PC-3 (cell line): ENCODE measurements at regions of chr17 and their contacts with region 1.

Region 1: GRCh38 chr17:979538-980405 is at the start of gene NXN:
- DNase-seq: peak; percentile 51
- ATAC-seq: peak; percentile 78
- H3K4me3 ChIP-seq: peak within 1 kb of the TSS; percentile 79
- H3K27ac ChIP-seq: peak within 1 kb of the TSS; percentile 22; the same call in 1 of the 2 replicates
- H3K4me1 ChIP-seq: peaks cover 11% of the 10 kb centered on the region; the same call in 1 of the 2 replicates
- H3K27me3 ChIP-seq: no peaks in the 10 kb centered on the region
- CTCF ChIP-seq: no peak
- total RNA-seq, gene NXN: 20.8 and 25.6 TPM in 2 replicates

Region 2: DNA sequence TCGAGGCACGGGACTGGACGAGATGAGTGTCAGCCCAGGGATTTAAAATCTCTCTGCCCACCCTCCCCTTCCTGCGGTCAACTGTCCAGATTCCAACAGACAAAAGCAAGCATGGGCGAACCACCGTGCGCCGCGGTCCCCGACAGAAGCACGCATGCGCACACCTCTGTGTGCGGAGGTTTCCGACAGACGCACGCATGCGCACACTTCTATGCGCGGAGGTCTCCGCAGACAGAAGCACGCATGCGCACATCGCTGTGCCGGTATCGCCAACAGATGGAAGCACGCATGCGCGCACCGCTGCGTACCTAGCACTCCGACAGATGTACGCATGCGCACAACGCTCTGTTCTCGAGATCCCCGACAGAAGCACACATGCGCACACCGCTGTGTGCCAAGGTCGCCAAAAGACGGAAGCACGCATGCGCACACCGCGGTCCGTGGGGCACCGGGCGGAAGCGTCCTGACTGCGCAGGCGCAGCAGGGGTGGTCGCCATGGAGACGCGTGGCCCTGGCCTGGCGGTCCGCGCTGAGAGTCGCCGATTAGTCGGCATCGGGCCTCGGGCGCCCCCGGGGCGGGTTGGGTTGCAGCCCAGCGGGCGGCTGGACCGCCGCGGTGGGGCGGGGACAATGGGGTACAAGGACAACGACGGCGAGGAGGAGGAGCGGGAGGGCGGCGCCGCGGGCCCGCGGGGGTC is 569.8 kb before region 1 on chr17:
- CTCF ChIA-PET with region 1: interaction called, 13 read pairs
- POLR2A ChIA-PET with region 1: no interaction called
- intact Hi-C with region 1: no loop called
- DNase-seq: peak; percentile 99
- ATAC-seq: peak; percentile 86
- H3K4me3 ChIP-seq: peak overlapping the region; percentile 88
- H3K27ac ChIP-seq: peak overlapping the region; percentile 25; the same call in 1 of the 2 replicates
- H3K4me1 ChIP-seq: peaks cover 4% of the 10 kb centered on the region; the same call in 1 of the 2 replicates
- H3K27me3 ChIP-seq: no peaks in the 10 kb centered on the region
- CTCF ChIP-seq: no peak

Region 3: GRCh38 chr17:794876-795275 is 184.9 kb before region 1 on chr17:
- CTCF ChIA-PET with region 1: interaction called, 12 read pairs
- POLR2A ChIA-PET with region 1: no interaction called
- intact Hi-C with region 1: loop called (anchors 1 kb)
- DNase-seq: peak; percentile 80
- ATAC-seq: peak; percentile 76
- H3K4me3 ChIP-seq: peak overlapping the region; percentile 51; the same call in 1 of the 2 replicates
- H3K27ac ChIP-seq: no peak overlapping the region
- H3K4me1 ChIP-seq: peaks cover 9% of the 10 kb centered on the region
- H3K27me3 ChIP-seq: no peaks in the 10 kb centered on the region
- CTCF ChIP-seq: peak; percentile 86

Region 4: GRCh38 chr17:835263-835662 is 144.5 kb before region 1 on chr17:
- CTCF ChIA-PET with region 1: no interaction called
- POLR2A ChIA-PET with region 1: no interaction called
- intact Hi-C with region 1: no loop called
- DNase-seq: peak; percentile 2
- ATAC-seq: no peak
- H3K4me3 ChIP-seq: no peak overlapping the region
- H3K27ac ChIP-seq: no peak overlapping the region
- H3K4me1 ChIP-seq: no peaks in the 10 kb centered on the region
- H3K27me3 ChIP-seq: no peaks in the 10 kb centered on the region
- CTCF ChIP-seq: no peak

Region 5: DNA sequence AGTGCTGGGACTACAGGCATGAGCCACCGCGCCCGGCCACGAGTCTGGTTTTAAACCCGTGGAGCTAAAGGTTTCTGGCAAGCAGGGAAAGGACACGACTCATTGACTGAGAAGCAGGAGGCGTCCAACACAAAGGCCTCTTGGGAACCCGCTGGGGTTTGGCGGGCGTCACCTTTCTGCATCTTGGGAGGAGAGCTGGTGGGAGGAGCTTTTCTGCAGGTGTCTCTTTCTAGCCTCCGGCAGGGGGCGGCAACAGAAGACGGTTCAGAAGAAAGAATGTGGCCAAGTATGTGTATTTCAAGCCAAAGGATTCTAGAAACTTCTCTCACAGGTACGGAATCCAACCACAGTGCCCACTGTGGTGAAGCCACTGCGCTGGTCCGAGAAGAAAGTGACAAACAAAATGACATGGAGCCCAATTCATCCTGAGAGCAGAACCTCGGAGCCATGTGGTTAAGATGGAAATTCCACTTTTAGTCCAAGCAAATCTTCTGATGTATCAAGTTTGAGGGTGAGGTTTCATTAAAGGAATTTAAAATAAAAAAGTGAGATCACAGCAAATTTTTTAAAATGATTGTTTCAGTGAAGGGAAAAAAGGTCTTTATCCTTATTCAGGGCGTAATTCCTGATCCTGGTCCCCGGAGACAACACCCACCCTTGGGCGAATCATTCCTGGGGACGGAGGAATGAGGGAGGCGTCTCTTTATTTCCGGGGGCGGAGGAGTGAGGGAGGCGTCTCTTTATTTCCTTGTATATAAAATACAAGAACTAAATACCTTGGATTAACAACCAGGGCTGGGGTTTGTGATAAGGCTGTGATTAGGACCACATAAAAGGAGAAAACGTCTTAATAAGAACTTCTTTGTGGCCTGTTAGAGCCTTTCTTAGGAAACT is 100.0 kb before region 1 on chr17:
- CTCF ChIA-PET with region 1: interaction called, 20 read pairs
- POLR2A ChIA-PET with region 1: no interaction called
- intact Hi-C with region 1: loop called (anchors 1 kb)
- DNase-seq: peak; percentile 84
- ATAC-seq: peak; percentile 90
- H3K4me3 ChIP-seq: no peak overlapping the region
- H3K27ac ChIP-seq: no peak overlapping the region
- H3K4me1 ChIP-seq: no peaks in the 10 kb centered on the region; the same call in 1 of the 2 replicates
- H3K27me3 ChIP-seq: no peaks in the 10 kb centered on the region
- CTCF ChIP-seq: peak; percentile 62

Region 6: GRCh38 chr17:927611-928461 is 51.9 kb before region 1 on chr17:
- CTCF ChIA-PET with region 1: interaction called, 3 read pairs
- POLR2A ChIA-PET with region 1: interaction called, 11 read pairs
- intact Hi-C with region 1: loop called (anchors 10 kb)
- DNase-seq: peak; percentile 88
- ATAC-seq: peak; percentile 76
- H3K4me3 ChIP-seq: peak overlapping the region; percentile 58; the same call in 1 of the 2 replicates
- H3K27ac ChIP-seq: peak overlapping the region; percentile 64
- H3K4me1 ChIP-seq: peaks cover 45% of the 10 kb centered on the region
- H3K27me3 ChIP-seq: no peaks in the 10 kb centered on the region
- CTCF ChIP-seq: no peak

Region 7: DNA sequence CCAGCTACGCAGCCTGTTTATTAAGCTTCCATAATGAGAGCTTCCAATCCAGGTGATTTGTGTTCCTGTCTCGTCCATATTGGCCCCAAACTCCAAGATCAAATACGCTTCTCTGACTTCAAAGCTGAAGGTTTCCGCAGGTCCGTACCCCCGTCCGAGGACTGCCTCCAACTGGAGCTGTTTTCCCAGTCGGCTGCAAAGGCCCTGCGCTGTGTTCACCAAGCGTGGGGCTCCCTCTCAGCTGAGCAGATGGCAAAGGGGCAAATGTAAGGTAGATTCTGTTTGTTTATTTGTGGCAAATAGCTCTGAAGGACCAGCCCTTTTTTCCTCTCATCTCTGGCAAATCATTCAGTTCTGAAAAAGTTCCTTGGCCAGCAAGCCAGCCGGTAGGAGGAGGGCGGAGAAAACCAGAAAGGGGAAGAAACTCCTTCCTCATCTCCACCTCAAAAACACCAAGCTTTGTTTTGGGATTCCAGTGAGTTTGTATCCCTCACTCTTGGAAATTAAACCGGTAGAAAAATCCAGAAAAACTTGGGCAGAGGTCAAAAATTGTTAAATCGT is 35.4 kb before region 1 on chr17:
- CTCF ChIA-PET with region 1: no interaction called
- POLR2A ChIA-PET with region 1: no interaction called
- intact Hi-C with region 1: no loop called
- DNase-seq: no peak
- ATAC-seq: no peak
- H3K4me3 ChIP-seq: no peak overlapping the region
- H3K27ac ChIP-seq: no peak overlapping the region
- H3K4me1 ChIP-seq: no peaks in the 10 kb centered on the region
- H3K27me3 ChIP-seq: no peaks in the 10 kb centered on the region
- CTCF ChIP-seq: no peak

Region 8: DNA sequence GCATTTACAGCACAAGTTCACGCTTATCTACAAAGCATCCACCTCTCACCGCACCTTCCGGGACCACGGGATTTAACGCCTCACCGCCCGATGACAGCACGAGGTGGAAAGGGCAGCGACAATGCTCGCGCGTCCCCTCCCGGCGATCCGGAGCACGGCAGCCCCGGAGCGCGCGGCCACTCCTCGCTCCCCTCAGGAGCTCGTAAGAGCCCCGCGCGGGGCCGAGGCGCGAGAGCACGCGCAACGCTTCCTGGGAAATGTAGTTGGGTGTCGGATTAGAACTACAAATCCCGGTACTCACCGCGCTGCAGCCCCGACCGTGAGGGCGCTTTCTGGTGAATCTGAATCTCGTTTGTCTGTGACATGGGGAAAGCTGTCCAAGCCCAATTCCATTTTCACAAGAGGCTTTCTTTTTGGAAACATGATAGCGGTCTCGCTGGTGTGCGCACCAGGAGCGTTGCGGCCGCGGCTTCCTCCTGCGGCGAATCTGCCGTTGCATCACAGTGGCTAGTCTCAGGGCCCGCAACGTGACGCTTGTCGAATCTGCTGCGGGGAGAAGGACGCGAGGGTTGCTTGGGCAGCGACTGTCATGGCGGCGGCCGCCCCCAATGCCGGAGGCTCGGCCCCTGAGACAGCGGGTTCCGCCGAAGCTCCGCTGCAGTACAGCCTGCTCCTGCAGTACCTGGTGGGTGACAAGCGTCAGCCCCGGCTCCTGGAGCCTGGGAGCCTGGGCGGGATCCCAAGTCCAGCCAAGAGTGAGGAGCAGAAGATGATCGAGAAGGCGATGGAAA is 17.0 kb after region 1 on chr17 and contains the start of gene TIMM22:
- CTCF ChIA-PET with region 1: interaction called, 12 read pairs
- POLR2A ChIA-PET with region 1: interaction called, 4 read pairs
- intact Hi-C with region 1: no loop called
- DNase-seq: peak; percentile 96
- ATAC-seq: peak; percentile 98
- H3K4me3 ChIP-seq: peak within 1 kb of the TSS; percentile 100
- H3K27ac ChIP-seq: peak within 1 kb of the TSS; percentile 68
- H3K4me1 ChIP-seq: peaks cover 12% of the 10 kb centered on the region
- H3K27me3 ChIP-seq: no peaks in the 10 kb centered on the region
- CTCF ChIP-seq: peak; percentile 81
- total RNA-seq, gene TIMM22: 17.2 and 17.7 TPM in 2 replicates